Tibial artery (tissue), 4 donors: ENCODE measurements at regions of chr18 and their contacts with region 1.

Region 1: GRCh38 chr18:74495581-74496507 is at the start of gene CNDP2:
- DNase-seq: peak; percentile 100
- H3K4me3 ChIP-seq: peak within 1 kb of the TSS; percentile 68 to 96
- H3K27ac ChIP-seq: peak within 1 kb of the TSS; percentile 81 to 92
- H3K4me1 ChIP-seq: peaks cover 0 to 21% (median 13%) of the 10 kb centered on the region in 4 donors
- H3K27me3 ChIP-seq: no peaks in the 10 kb centered on the region
- CTCF ChIP-seq: no peak

Region 2: GRCh38 chr18:74147779-74148542 is 347.9 kb before region 1 on chr18 and contains the starts of genes FBXO15 and TIMM21:
- intact Hi-C with region 1: loop called (anchors 2 kb)
- DNase-seq: peak; percentile 97 to 98
- H3K4me3 ChIP-seq: peak within 1 kb of the TSS; percentile 72 to 74
- H3K27ac ChIP-seq: peak within 1 kb of the TSS; percentile 86 to 92
- H3K4me1 ChIP-seq: peaks cover 0 to 36% (median 27%) of the 10 kb centered on the region in 4 donors
- H3K27me3 ChIP-seq: no peaks in the 10 kb centered on the region
- CTCF ChIP-seq: peak in 1 of 2 experiments; percentile 5

Region 3: DNA sequence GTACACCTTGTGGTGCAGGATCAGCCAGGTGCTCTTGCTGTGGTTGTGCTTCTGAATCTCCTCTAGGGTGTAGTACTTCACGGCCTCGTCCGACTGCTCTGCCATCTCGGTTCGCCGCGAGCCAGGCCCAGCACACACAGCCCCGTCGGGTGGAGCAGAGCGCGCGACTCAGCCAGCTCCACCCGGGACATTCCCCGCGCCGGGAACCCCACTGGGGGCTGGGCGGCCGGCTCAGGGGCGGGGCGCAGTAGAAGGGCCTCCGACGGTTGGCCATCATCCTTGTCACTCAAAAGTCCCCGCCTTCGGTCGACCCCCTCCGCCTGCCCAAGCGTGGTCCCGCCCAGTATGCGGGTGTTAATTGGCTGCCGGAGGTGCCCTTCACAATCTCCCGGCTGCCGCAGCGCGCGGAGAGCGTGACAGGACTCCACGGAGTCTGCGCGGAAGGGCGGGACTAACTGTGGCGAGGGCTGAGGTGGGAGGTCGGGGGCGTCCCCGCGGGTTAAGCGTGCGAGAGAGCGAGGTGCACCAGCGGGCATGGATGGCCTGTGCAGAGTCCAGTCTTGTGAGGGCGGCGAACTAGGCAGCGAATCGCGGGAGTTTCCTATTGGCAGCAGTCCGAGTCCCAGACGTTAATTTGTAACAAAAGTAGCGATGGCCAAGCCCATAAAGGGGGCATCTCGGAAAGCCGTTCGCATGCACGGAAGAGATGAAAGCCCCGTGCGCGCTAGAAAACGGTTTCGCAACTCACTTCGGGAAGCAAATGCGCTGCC is 203.9 kb before region 1 on chr18 and contains the start of gene CYB5A:
- intact Hi-C with region 1: loop called (anchors 5 kb)
- DNase-seq: peak; percentile 97 to 99
- H3K4me3 ChIP-seq: peak within 1 kb of the TSS; percentile 74 to 91
- H3K27ac ChIP-seq: peak within 1 kb of the TSS; percentile 66 to 79
- H3K4me1 ChIP-seq: peaks cover 0 to 34% (median 22%) of the 10 kb centered on the region in 4 donors
- H3K27me3 ChIP-seq: no peaks in the 10 kb centered on the region
- CTCF ChIP-seq: peak; percentile 12 to 20

Region 4: DNA sequence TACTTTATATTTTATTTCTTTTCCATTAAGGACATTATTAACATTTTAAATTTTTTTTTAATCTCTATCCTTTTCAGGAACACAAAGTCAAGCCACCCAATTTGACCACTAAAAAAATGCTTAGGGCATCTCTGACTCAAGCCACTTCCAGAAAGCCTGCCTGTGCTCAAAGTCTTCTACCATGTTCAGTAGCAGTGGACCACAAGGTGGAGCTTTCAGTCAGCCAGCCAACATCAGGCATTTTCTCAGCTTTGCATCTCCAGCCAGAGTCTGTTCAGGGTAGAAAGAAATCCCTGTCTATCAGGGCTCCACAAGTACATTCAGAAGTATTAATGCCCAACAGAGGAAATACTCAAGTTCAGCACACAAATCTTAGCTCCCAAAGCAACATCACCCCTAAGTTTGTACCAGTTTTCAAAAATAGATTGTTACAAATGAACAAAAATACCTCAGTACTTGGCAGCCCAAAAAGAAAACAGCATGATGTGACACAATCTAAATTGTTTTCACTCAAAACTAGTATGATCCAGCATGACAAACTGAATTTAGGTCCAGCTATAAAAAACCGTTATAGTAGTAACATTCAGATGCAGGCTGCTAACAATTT is 142.6 kb before region 1 on chr18:
- intact Hi-C with region 1: loop called (anchors 5 kb)
- DNase-seq: peak; percentile 60 to 80
- H3K4me3 ChIP-seq: no peak overlapping the region
- H3K27ac ChIP-seq: peak overlapping the region; percentile 27 to 29
- H3K4me1 ChIP-seq: peaks cover 0 to 16% (median 2%) of the 10 kb centered on the region in 4 donors
- H3K27me3 ChIP-seq: no peaks in the 10 kb centered on the region
- CTCF ChIP-seq: peak; percentile 68 to 78

Region 5: GRCh38 chr18:74597662-74598349 is 102.0 kb after region 1 on chr18 and contains the start of gene ZNF407:
- intact Hi-C with region 1: loop called (anchors 2 kb)
- DNase-seq: peak; percentile 85 to 91
- H3K4me3 ChIP-seq: peak within 1 kb of the TSS; percentile 94 to 99
- H3K27ac ChIP-seq: peak within 1 kb of the TSS; percentile 96 to 99
- H3K4me1 ChIP-seq: peaks cover 0 to 25% (median 11%) of the 10 kb centered on the region in 4 donors
- H3K27me3 ChIP-seq: no peaks in the 10 kb centered on the region
- CTCF ChIP-seq: no peak